ENCODE measurements at regions of chr22 and their contacts with region 1.

Region 1: DNA sequence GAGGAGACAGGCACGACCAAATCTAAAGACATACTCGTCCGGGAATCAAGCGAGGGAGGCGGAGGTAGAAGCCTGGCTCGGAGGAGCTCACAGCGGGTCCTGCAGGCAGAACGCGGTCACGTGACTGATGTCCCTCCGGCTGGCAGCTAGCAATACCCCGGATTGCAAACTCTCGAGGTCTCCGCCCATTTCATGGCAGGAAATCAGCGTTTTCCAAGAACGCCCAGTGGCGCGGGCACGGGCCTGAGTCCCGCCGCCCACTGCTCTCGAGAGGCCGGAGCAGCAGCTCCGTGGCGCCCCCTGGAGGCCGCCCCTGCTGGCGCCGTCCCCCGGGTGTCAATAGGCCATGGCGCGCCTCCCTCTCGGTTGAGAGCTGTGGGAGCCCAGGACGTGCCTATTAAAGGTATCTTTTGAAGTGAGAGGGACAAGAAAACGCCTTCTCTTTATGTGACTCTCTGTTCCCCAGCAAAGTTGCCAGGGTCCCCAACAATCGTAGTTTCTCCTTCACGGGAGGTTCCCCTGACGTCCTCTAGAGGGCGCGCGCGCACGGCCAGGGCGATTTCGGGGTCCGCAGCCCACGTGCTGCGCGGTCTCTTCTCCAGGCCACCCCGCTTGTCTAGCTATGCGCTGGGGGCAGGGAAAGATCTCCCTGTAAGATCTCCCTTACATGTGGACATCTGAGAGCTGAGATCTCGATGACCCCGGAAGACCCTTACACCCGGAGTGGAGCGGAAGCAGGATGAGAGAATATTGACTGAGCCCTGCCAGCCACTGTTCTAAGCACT is 37.3 kb upstream of the RBFOX2 start:
- DNase-seq: peak; percentile 47
- ATAC-seq: peak; percentile 47
- H3K4me3 Mint-ChIP-seq: peak overlapping the region; percentile 70
- H3K27ac Mint-ChIP-seq: no peak overlapping the region
- H3K4me1 Mint-ChIP-seq: peaks cover 11% of the 10 kb centered on the region
- H3K27me3 Mint-ChIP-seq: peaks cover 27% of the 10 kb centered on the region
- CTCF ChIP-seq: peak; percentile 76

Region 2: DNA sequence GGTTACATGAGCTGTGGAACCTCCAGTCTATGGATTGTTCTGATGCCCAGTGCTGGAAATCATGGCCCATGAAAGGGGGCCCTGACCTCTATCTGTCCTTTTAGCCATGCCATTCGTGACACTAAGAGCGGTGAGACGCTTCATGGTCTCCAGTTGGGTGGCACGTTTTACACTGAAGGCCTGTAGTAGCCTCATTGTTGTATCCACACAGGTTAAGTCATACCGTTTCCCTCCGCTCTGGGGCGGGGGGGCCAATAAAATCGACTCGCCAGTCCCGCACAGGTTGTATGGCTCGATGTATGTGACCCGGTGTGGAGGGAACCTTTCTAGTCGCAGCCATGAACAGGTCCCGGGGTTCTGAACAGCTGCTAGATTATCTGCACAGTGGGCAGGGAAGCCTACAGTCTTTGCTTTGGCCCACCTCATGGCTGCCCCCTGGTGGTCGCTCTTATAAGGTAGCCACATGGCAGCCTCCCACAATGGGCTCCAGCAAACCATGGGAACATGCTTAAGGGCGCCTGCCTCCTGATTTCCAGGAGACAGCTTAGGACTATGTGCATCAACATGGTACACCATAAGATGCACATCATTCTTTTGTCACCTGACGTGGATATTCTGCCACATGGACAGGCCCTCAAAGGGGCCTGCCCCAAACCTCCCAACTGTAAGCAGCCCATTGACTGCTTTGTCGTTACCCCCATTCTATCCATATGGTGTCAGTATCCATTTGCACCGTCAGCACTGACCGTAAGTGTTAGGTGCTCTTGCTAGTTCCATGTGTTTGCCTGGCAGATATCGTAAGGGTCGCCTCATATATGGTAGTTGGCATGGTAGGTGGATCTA is 114.3 kb after region 1 on chr22:
- CTCF ChIA-PET with region 1: interaction called, 4 read pairs
- POLR2A ChIA-PET with region 1: no interaction called
- intact Hi-C with region 1: loop called (anchors 1 kb)
- DNase-seq: peak; percentile 78
- ATAC-seq: peak; percentile 100
- H3K4me3 Mint-ChIP-seq: no peak overlapping the region
- H3K27ac Mint-ChIP-seq: no peak overlapping the region
- H3K4me1 Mint-ChIP-seq: peaks cover 3% of the 10 kb centered on the region
- H3K27me3 Mint-ChIP-seq: no peaks in the 10 kb centered on the region
- CTCF ChIP-seq: no peak

Region 3: DNA sequence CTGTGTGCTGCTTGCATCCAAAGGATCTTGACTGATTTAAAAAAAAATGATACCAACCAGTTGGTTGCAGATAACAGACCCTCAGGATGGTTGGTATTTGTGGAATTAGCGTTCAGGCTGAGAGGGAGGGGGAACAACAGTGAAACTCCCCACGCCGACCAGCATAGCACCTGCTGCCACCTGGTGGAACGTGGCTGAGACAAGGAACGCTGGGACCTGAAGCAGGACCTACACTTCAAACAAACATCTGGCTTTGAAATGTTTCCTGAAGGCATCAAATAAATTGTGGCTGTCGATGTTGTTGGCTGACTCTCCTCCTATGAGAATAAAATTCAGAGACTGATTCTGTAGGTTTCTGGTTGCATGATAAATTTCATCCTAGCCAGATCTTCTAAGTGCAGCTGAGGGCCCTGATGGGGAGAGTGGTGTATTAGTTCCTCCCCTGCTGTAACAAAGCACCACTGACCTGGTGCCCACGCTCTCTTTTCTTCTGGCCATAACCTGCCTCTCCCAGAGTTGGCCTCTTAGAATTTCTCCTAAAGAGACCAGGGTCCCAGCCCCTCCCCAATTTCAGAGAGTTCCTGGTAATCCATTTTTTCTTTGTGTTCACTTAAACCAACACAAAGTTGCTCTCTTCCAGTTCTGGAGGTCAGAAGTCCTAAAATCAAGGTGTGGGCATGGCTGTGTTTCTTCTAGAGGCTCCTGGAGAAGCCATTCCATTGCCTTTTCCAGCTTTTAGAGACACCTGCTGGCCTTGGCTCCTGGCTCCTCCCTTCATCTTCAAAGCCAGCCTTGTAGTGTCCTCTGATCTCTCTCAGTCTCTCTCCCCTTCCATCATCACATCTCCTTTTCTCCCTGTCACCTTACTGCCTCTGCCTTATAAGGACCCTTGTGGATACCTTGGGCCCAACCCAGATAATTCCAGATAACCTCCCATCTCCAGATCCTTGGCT is 156.1 kb after region 1 on chr22:
- CTCF ChIA-PET with region 1: no interaction called
- POLR2A ChIA-PET with region 1: no interaction called
- intact Hi-C with region 1: loop called (anchors 5 kb)
- DNase-seq: no peak
- ATAC-seq: peak; percentile 57
- H3K4me3 Mint-ChIP-seq: peak overlapping the region; percentile 53
- H3K27ac Mint-ChIP-seq: no peak overlapping the region
- H3K4me1 Mint-ChIP-seq: peaks cover 3% of the 10 kb centered on the region
- H3K27me3 Mint-ChIP-seq: peaks cover 5% of the 10 kb centered on the region
- CTCF ChIP-seq: no peak

Measured in activated B cell treated with CpG ODN at 0.5 μM for 24 hours (primary cell).